BJ (cell line): ENCODE measurements at regions of chr20 and their contacts with region 1.

Region 1: GRCh38 chr20:19661717-19662636 is 96.1 kb upstream of the RIN2 start:
- DNase-seq: peak; percentile 19
- H3K4me3 ChIP-seq: no peak overlapping the region
- H3K27me3 ChIP-seq: peaks cover 2% of the 10 kb centered on the region
- CTCF ChIP-seq: peak; percentile 98

Region 2: DNA sequence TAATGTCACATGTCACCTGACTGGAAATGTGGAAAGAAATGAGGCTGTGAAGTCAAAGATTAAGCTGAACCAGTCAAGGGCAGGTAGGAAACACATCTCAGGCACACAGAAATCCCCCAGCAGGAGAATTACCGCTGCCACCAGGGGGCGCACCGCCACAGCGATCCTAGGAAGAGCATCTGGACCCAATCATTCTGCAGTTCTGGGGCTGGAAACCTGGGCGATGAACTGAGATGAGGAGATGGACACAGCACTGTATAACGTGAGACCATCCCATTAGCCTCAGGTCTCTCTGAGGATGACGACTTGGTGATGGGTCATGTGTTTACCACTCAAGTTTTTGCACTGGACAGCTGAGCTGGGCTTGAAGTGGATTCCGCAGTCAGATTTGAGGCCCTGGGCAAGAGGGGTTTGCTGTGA is 456.0 kb before region 1 on chr20:
- CTCF ChIA-PET with region 1: interaction called, 92 read pairs
- POLR2A ChIA-PET with region 1: no interaction called
- DNase-seq: no peak
- H3K4me3 ChIP-seq: no peak overlapping the region
- H3K27me3 ChIP-seq: peaks cover under 1% of the 10 kb centered on the region
- CTCF ChIP-seq: peak; percentile 87

Region 3: DNA sequence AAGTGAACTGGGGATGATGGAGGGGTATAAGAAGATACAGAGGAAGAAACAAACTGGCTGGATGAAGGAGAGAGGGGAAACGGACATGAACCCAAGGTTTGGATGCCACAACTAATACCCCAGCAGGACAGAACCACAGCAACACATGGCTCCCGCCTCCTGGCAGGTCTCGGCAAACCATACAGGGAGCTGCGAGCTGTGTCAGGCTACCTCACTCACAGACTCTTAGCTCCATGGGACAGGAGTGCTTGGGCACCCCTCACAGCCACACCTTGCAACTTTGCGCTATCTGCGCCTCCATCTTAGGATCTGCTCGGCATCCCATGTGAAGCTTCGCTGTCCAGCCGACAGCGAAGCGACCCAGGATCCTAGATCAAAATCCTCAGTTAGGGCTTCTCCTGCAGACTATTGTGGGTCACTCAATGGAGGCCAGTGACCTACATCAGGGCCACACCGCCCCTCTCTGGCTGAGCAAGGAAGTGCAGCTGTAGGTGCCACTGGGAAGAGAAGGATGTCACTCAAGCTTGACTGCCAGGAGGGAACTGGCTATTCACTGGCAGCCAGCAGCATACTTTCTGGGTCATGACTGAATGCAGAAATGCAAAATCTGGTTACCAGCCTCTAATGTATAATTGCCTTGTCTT is 78.3 kb before region 1 on chr20:
- CTCF ChIA-PET with region 1: interaction called, 61 read pairs
- POLR2A ChIA-PET with region 1: no interaction called
- DNase-seq: no peak
- H3K4me3 ChIP-seq: no peak overlapping the region
- H3K27me3 ChIP-seq: no peaks in the 10 kb centered on the region
- CTCF ChIP-seq: peak; percentile 87

Region 4: GRCh38 chr20:19628570-19629169 is 33.3 kb before region 1 on chr20:
- CTCF ChIA-PET with region 1: interaction called, 145 read pairs
- POLR2A ChIA-PET with region 1: no interaction called
- DNase-seq: no peak
- H3K4me3 ChIP-seq: no peak overlapping the region
- H3K27me3 ChIP-seq: no peaks in the 10 kb centered on the region
- CTCF ChIP-seq: peak; percentile 82

Region 5: DNA sequence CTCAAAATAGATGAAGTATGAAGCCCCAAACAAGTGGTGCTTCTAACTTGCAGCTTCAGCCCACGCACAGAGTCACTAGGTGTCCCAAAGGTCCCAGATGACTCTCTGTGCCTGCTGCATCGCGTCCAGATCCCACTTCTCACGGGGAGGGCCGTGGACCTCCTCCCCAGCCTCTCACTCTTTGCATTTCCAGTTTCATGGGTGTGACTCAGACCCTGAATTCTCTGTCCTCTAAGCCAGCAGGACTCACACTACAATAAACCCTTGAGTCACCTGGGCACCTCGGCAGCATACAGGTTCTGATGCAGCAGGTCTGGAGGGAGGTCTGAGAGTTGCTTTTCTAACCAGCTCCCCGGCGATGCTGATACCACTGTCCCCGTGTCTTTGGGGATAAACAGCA is 17.9 kb before region 1 on chr20:
- CTCF ChIA-PET with region 1: interaction called, 18 read pairs
- POLR2A ChIA-PET with region 1: no interaction called
- DNase-seq: no peak
- H3K4me3 ChIP-seq: no peak overlapping the region
- H3K27me3 ChIP-seq: no peaks in the 10 kb centered on the region; the same call in 1 of the 2 replicates
- CTCF ChIP-seq: no peak

Region 6: GRCh38 chr20:19672498-19672897 is 10.5 kb after region 1 on chr20:
- CTCF ChIA-PET with region 1: interaction called, 17 read pairs
- POLR2A ChIA-PET with region 1: no interaction called
- DNase-seq: no peak
- H3K4me3 ChIP-seq: no peak overlapping the region
- H3K27me3 ChIP-seq: peaks cover 5% of the 10 kb centered on the region; the same call in 1 of the 2 replicates
- CTCF ChIP-seq: no peak

Region 7: DNA sequence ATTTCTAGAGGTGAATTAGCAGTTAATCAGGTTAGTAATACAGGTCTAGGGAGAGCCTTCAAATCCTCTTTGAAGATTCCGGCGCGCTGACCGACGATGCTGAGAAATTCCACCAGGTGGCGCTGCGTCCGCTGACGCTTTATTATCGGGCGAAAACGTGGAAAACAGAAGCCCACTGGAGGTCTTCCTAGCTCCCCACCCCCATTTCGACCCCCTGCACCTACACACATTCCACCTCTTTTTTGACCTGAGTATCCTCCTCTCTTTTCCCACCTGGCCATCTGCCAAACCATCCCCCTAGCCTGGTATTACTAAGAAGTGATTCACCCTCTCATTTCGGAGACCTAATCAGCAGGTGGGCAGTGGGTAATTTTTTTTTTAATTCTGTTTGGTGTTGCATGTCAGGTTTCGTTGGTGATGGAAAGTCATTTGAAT is 30.7 kb after region 1 on chr20:
- CTCF ChIA-PET with region 1: interaction called, 12 read pairs
- POLR2A ChIA-PET with region 1: no interaction called
- DNase-seq: no peak
- H3K4me3 ChIP-seq: no peak overlapping the region
- H3K27me3 ChIP-seq: no peaks in the 10 kb centered on the region
- CTCF ChIP-seq: peak; percentile 86

Region 8: DNA sequence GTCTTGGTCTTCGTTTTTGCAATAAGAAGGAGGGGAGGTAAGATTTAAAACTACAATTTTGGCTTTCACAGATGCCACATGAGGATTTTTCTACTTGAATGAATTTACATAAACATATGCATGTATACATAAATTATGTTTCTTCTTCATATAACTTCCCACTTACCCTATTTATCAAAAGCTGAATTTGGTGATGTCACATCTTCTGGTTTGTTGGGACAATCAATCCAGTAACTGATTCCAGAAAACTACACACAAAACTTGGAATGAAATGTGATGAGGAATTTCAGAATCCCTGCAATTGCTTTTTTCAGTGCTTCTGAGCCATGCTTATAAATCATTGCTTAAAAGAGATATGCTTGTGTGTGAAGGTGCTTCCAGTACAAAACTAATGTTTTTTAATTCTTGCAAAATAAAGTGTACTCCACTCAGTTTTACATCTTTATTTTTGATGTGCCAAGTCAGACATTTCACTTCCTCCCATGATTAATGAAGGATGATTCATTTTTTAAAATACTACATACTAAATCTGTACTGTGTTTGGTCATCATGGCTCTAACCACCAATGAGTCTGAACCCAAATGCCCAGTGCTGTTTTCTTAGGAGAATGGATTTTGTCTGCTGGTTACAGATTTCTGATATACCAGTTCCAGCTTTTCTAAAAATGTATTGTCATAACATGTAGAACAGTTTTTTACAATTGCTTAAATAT is 64.0 kb after region 1 on chr20:
- CTCF ChIA-PET with region 1: no interaction called
- POLR2A ChIA-PET with region 1: no interaction called
- DNase-seq: no peak
- H3K4me3 ChIP-seq: no peak overlapping the region
- H3K27me3 ChIP-seq: no peaks in the 10 kb centered on the region
- CTCF ChIP-seq: no peak